Natural killer cell (primary cell): ENCODE measurements at regions of chrX and their contacts with region 1.

Region 1: DNA sequence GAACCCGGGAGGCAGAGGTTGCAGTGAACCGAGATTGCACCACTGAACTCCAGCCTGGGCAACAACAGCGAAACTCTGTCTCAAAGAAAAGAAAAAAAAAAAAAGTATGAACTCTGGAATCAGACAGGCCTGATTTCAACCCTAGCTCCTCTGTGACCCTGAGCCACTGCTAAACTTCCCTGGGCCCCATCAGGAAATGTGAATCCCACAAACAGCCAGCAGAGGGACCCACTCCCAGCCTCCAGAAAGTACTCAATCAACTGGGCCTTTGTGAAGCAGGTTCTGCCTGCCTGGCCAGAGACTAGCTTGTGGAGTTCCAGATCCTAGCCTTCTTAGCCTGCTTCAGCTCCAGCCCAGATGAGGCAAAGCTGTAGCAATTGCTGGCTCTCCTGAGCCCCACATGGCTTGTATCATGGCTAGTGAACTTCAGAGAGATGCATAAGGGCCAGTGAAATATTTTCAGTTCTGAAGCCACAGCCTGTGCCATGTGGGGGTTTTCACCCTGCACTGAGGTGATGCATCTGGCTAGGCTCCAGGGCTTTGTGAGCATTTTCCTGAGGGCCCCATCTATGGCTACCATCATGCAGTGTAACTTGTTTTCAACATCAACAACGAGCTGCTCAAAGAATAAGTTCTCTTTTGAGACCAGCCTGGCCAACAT is 7.2 kb upstream of the IDS start:
- DNase-seq: peak; percentile 35 to 81
- ATAC-seq: peak; percentile 42 to 59 (median 46)
- H3K4me3 ChIP-seq: no peak overlapping the region
- H3K4me3 Mint-ChIP-seq: peak overlapping the region; percentile 60
- H3K27ac ChIP-seq: peak overlapping the region; percentile 82
- H3K27ac Mint-ChIP-seq: peak overlapping the region; percentile 88
- H3K4me1 ChIP-seq: peaks cover 45% of the 10 kb centered on the region
- H3K4me1 Mint-ChIP-seq: peaks cover 45 to 52% of the 10 kb centered on the region in 2 donors
- H3K27me3 ChIP-seq: no peaks in the 10 kb centered on the region
- H3K27me3 Mint-ChIP-seq: peaks cover 0 to 2% of the 10 kb centered on the region in 2 donors
- CTCF ChIP-seq: peak; percentile 59

Region 2: GRCh38 chrX:147911192-147912022 is 1600.9 kb before region 1 on chrX and contains the start of gene FMR1:
- intact Hi-C with region 1: loop called (anchors 10 kb)
- DNase-seq: peak; percentile 88 to 96
- ATAC-seq: peak; percentile 87 to 93 (median 89)
- H3K4me3 ChIP-seq: peak within 1 kb of the TSS; percentile 99
- H3K4me3 Mint-ChIP-seq: peak within 1 kb of the TSS; percentile 95
- H3K27ac ChIP-seq: peak within 1 kb of the TSS; percentile 97
- H3K27ac Mint-ChIP-seq: peak within 1 kb of the TSS; percentile 87 to 96
- H3K4me1 ChIP-seq: peaks cover 10% of the 10 kb centered on the region
- H3K4me1 Mint-ChIP-seq: peaks cover 28 to 31% of the 10 kb centered on the region in 2 donors
- H3K27me3 ChIP-seq: no peaks in the 10 kb centered on the region
- H3K27me3 Mint-ChIP-seq: no peaks in the 10 kb centered on the region
- CTCF ChIP-seq: no peak
- total RNA-seq, gene FMR1: 124 to 147 (median 127) TPM

Region 3: GRCh38 chrX:149003863-149004660 is 508.3 kb before region 1 on chrX:
- intact Hi-C with region 1: no loop called
- DNase-seq: no peak
- ATAC-seq: no peak
- H3K4me3 ChIP-seq: no peak overlapping the region
- H3K4me3 Mint-ChIP-seq: no peak overlapping the region
- H3K27ac ChIP-seq: no peak overlapping the region
- H3K27ac Mint-ChIP-seq: no peak overlapping the region
- H3K4me1 ChIP-seq: no peaks in the 10 kb centered on the region
- H3K4me1 Mint-ChIP-seq: no peaks in the 10 kb centered on the region
- H3K27me3 ChIP-seq: no peaks in the 10 kb centered on the region
- H3K27me3 Mint-ChIP-seq: peaks cover 0 to 8% of the 10 kb centered on the region in 2 donors
- CTCF ChIP-seq: no peak

Region 4: GRCh38 chrX:149611623-149612175 is 99.3 kb after region 1 on chrX:
- intact Hi-C with region 1: no loop called
- DNase-seq: no peak
- ATAC-seq: no peak
- H3K4me3 ChIP-seq: no peak overlapping the region
- H3K4me3 Mint-ChIP-seq: no peak overlapping the region
- H3K27ac ChIP-seq: no peak overlapping the region
- H3K27ac Mint-ChIP-seq: peak overlapping the region in 1 of 2 donors; percentile 73
- H3K4me1 ChIP-seq: no peaks in the 10 kb centered on the region
- H3K4me1 Mint-ChIP-seq: peaks cover 13 to 16% of the 10 kb centered on the region in 2 donors
- H3K27me3 ChIP-seq: no peaks in the 10 kb centered on the region
- H3K27me3 Mint-ChIP-seq: no peaks in the 10 kb centered on the region
- CTCF ChIP-seq: no peak

Region 5: GRCh38 chrX:149631234-149632165 is 119.1 kb after region 1 on chrX and contains the start of gene TMEM185A:
- intact Hi-C with region 1: loop called (anchors 5 kb)
- DNase-seq: peak; percentile 62 to 86
- ATAC-seq: peak; percentile 86 to 90 (median 88)
- H3K4me3 ChIP-seq: peak within 1 kb of the TSS; percentile 57
- H3K4me3 Mint-ChIP-seq: peak within 1 kb of the TSS; percentile 84
- H3K27ac ChIP-seq: peak within 1 kb of the TSS; percentile 40
- H3K27ac Mint-ChIP-seq: peak within 1 kb of the TSS; percentile 49 to 88
- H3K4me1 ChIP-seq: peaks cover 16% of the 10 kb centered on the region
- H3K4me1 Mint-ChIP-seq: peaks cover 35 to 40% of the 10 kb centered on the region in 2 donors
- H3K27me3 ChIP-seq: no peaks in the 10 kb centered on the region
- H3K27me3 Mint-ChIP-seq: peaks cover 3 to 8% of the 10 kb centered on the region in 2 donors
- CTCF ChIP-seq: no peak
- total RNA-seq, gene TMEM185A: 15.1 to 29.6 (median 26.6) TPM